ENCODE measurements at regions of chr5 and their contacts with region 1.

Region 1: DNA sequence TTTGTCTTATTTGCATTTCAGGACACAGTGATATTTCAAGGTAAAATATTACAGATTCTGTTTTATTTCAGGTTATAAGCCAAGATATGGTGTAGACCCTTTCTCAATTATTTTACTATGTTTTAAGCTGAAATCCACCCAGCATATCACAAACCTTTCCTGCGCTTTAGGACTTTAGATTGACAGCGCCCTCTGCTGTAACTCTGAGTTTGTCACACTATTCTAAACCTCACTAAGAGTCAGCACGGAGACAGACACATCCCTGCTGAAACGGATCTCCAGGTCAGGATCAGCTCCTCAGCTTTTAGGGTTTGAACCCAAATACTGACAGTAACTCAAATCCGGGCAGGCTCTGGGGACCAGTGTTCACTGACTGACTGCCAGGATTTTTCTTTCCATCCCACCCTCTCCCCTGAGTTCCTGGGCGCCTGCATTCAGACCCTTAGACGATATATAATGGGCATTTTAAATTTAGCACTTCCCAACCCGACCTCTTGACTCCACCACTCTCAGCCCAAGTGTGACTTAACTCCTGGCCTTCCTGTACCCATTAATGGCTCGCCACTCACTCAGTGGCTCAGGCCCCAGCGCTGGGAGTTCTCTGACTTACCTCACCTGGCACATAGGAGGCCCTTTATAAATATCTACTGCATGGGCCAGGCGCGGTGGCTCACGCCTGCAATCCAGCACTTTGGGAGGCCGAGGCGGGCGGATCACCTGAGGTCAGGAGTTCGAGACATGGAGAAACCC is 33.5 kb downstream of the TLX3 start:
- DNase-seq: peak in 1 of 2 experiments; percentile 56
- H3K4me3 ChIP-seq: no peak overlapping the region
- H3K27ac ChIP-seq: no peak overlapping the region
- H3K4me1 ChIP-seq: no peaks in the 10 kb centered on the region
- H3K27me3 ChIP-seq: peaks cover 0 to 4% (median 2%) of the 10 kb centered on the region in 4 experiments; a peak in 3 of 7 replicates
- CTCF ChIP-seq: peak in 2 of 3 experiments; percentile 78 to 81; a peak in 3 of 4 replicates
- EP300 ChIP-seq: no peak
- POLR2A ChIP-seq: no peak
- RAD21 ChIP-seq: peak; percentile 84

Region 2: DNA sequence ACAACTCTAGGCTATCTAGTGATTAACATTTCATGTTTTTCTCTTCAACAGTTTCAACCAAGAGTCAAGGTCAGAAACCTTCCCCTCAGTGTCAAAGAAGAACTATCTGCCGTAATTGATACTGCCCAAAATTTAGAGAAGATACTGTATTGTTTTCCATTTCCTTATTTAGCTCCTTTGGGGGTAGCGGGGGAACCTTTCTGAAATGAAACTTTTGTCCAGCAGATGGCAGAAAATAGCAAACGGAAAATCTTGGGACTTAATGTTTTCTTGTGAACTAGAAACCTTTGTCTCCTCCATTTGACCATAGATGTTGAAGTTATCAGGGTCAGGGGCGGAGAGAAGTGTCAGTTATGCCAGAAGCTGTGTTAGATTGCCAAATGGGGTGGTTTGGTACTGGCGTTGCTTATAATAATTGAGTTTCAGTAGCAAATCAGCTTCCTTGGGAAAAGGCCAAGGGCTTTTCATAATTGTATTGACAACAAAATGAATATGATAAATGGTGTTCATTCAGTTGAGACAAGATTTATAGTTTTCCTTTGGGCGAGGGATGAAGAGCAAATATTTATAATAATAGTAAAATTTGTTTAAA is 135.2 kb before region 1 on chr5:
- CTCF ChIA-PET with region 1: interaction called, 31 read pairs
- POLR2A ChIA-PET with region 1: no interaction called
- DNase-seq: peak; percentile 13 to 47
- H3K4me3 ChIP-seq: no peak overlapping the region
- H3K27ac ChIP-seq: no peak overlapping the region
- H3K4me1 ChIP-seq: no peaks in the 10 kb centered on the region
- H3K27me3 ChIP-seq: no peaks in the 10 kb centered on the region
- CTCF ChIP-seq: peak in 2 of 3 experiments; percentile 43 to 57; a peak in 3 of 4 replicates
- EP300 ChIP-seq: no peak
- POLR2A ChIP-seq: no peak
- RAD21 ChIP-seq: peak; percentile 61 to 66

Region 3: DNA sequence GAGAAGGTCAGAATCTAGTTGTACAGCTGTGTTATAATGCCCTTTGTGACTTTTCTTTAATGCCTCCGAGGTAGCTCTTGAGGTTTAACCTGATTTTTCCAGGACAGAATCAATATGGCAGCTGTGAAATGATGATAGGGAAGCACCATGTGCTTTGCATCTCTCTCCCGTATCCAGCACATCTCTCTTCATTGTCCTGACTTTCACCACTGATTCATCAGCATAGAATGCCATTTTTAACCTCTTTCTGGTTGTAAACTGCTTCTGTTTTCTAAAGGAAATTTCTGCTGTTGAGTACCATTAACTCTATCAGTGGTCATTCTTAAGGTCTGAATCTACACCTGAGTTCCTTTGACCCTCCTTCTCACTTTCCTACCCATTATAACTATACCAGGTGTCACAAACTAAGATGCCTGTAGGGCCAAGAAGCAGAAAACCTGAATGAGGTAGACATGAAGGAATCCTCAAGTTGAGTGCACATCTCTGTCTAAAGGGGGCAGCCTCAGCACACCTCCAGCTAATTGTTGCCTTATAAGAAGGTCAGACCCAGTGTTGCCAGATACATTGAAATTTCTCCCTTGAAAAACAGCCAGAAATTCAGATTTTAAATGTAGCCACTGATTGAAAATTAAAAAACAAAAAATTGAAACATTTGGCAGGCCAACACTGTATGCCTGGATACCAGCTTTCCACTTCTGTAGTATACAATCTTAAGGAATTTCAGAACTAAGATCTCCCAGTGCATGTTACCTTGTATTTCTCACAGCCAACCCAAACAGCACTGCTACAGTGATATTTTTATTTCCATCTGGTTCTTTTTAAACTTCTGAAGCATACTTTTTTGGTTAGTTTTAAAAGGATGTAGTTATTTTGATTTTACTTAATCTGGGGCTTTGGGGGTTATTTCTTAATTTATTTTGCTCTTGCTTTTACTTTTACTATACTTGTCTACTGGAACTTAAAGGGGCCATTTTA is 69.3 kb before region 1 on chr5:
- CTCF ChIA-PET with region 1: interaction called, 33 read pairs
- POLR2A ChIA-PET with region 1: no interaction called
- DNase-seq: peak in 1 of 2 experiments; percentile 33
- H3K4me3 ChIP-seq: no peak overlapping the region
- H3K27ac ChIP-seq: no peak overlapping the region
- H3K4me1 ChIP-seq: peaks cover 0 to 3% (median 0%) of the 10 kb centered on the region in 4 experiments; a peak in 1 of 7 replicates
- H3K27me3 ChIP-seq: no peaks in the 10 kb centered on the region
- CTCF ChIP-seq: peak in 2 of 3 experiments; percentile 77 to 79; a peak in 3 of 4 replicates
- EP300 ChIP-seq: no peak
- POLR2A ChIP-seq: no peak
- RAD21 ChIP-seq: peak; percentile 86 to 87

Region 4: GRCh38 chr5:171310212-171310818 is 32.2 kb before region 1 on chr5:
- CTCF ChIA-PET with region 1: interaction called, 14 read pairs
- POLR2A ChIA-PET with region 1: no interaction called
- DNase-seq: peak in 1 of 2 experiments; percentile 78
- H3K4me3 ChIP-seq: peak overlapping the region in 1 of 4 experiments; percentile 51; a peak in 3 of 8 replicates
- H3K27ac ChIP-seq: no peak overlapping the region
- H3K4me1 ChIP-seq: peaks cover 0 to 38% (median 18%) of the 10 kb centered on the region in 4 experiments; a peak in 6 of 7 replicates
- H3K27me3 ChIP-seq: peaks cover 93 to 100% (median 99%) of the 10 kb centered on the region in 4 experiments
- CTCF ChIP-seq: peak in 2 of 3 experiments; percentile 53 to 76; a peak in 3 of 4 replicates
- EP300 ChIP-seq: no peak
- POLR2A ChIP-seq: no peak
- RAD21 ChIP-seq: peak; percentile 9 to 40; a peak in 2 of 4 replicates

Region 5: GRCh38 chr5:171323806-171324633 is 18.5 kb before region 1 on chr5:
- CTCF ChIA-PET with region 1: interaction called, 44 read pairs
- POLR2A ChIA-PET with region 1: no interaction called
- DNase-seq: no peak
- H3K4me3 ChIP-seq: no peak overlapping the region
- H3K27ac ChIP-seq: no peak overlapping the region
- H3K4me1 ChIP-seq: peaks cover 0 to 6% (median 2%) of the 10 kb centered on the region in 4 experiments; a peak in 3 of 7 replicates
- H3K27me3 ChIP-seq: peaks cover 14 to 48% (median 38%) of the 10 kb centered on the region in 4 experiments
- CTCF ChIP-seq: peak in 2 of 3 experiments; percentile 19 to 22; a peak in 2 of 4 replicates
- EP300 ChIP-seq: no peak
- POLR2A ChIP-seq: no peak
- RAD21 ChIP-seq: no peak

Region 6: GRCh38 chr5:171365351-171365750 is 22.8 kb after region 1 on chr5:
- CTCF ChIA-PET with region 1: interaction called, 10 read pairs
- POLR2A ChIA-PET with region 1: no interaction called
- DNase-seq: peak in 1 of 2 experiments; percentile 53
- H3K4me3 ChIP-seq: no peak overlapping the region
- H3K27ac ChIP-seq: no peak overlapping the region
- H3K4me1 ChIP-seq: no peaks in the 10 kb centered on the region
- H3K27me3 ChIP-seq: no peaks in the 10 kb centered on the region
- CTCF ChIP-seq: peak; percentile 5 to 68 (median 54)
- EP300 ChIP-seq: no peak
- POLR2A ChIP-seq: no peak
- RAD21 ChIP-seq: peak; percentile 55 to 68